ENCODE measurements at regions of chr3 and their contacts with region 1.

Region 1: GRCh38 chr3:198080521-198081280 is 120.7 kb downstream of the LMLN start:
- DNase-seq: peak; percentile 85
- H3K4me3 ChIP-seq: peak overlapping the region; percentile 17 to 59; a peak in 3 of 4 replicates
- H3K27ac ChIP-seq: no peak overlapping the region
- H3K4me1 ChIP-seq: no peaks in the 10 kb centered on the region; a peak in 1 of 4 replicates
- H3K27me3 ChIP-seq: peaks cover 56% of the 10 kb centered on the region
- CTCF ChIP-seq: peak; percentile 59
- EP300 ChIP-seq: no peak
- RAD21 ChIP-seq: no peak

Region 2: DNA sequence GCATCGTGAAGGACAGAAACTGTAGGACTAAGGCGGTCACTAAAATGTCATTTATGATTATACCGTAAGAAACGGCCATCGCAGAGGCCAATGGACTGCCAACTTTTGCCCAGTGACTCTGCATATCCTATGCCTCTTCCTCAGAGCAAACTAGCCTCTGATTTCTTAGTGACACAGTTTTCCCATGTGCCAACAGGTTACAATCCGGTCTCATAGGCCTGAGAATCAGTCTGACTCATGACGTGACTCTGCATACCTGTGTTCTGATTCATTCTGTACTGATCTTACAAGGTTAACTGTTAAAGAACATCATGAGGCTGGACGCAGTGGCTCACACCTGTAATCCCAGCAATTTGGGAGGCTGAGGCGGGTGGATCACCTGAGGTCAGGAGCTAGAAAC is 361.8 kb before region 1 on chr3:
- CTCF ChIA-PET with region 1: no interaction called
- POLR2A ChIA-PET with region 1: no interaction called
- DNase-seq: no peak
- H3K4me3 ChIP-seq: no peak overlapping the region
- H3K27ac ChIP-seq: peak overlapping the region in 1 of 2 experiments; percentile 85; a peak in 2 of 4 replicates
- H3K4me1 ChIP-seq: peaks cover 0 to 7% of the 10 kb centered on the region in 2 experiments; a peak in 1 of 4 replicates
- H3K27me3 ChIP-seq: no peaks in the 10 kb centered on the region
- CTCF ChIP-seq: no peak
- EP300 ChIP-seq: no peak; a peak in 1 of 4 replicates
- RAD21 ChIP-seq: no peak

Region 3: DNA sequence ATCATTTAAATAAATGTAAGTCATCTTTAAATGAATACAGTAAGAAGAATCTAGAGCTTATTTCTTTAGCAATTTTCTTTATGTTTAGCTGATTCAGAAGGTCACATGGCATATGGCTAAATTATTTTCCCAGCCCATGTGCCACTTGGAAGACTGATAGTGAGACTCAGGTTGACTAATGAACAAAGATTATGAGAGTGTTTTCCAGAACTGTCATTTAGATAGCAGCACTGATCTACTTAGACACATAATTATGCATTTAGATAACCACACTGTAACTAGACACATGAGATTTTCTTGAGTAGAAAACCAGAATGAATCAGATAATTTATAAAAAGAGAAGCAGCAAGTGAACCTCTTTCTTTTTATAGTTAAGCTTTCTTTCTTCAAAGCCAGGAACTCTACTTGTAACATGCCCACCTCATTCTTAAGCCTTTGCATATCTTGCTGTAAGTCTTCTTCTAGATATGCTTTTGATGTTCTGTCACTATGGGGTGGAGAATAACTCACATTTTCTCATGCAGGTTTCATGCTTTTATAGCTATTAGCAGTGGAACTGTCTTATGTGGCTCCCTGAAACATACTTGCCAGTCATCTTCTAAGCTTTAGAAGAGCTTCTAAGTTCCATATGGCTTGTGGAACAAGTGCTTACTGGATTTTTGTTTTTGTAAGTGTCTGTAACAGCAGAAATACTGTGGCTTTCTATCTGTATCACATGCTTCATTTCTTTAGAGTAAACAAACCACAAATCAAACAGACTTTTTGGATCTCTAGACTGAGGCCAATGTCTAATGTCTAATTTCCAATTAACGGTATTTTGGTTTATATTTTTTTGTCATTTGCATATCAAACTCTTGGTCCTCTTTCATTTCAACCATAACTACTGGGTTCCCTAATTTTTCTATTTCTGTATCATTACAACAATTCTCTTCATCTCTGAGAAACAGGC is 19.3 kb before region 1 on chr3:
- CTCF ChIA-PET with region 1: interaction called, 12 read pairs
- POLR2A ChIA-PET with region 1: no interaction called
- DNase-seq: no peak
- H3K4me3 ChIP-seq: no peak overlapping the region
- H3K27ac ChIP-seq: no peak overlapping the region
- H3K4me1 ChIP-seq: no peaks in the 10 kb centered on the region
- H3K27me3 ChIP-seq: peaks cover 15% of the 10 kb centered on the region; the same call in 1 of the 2 replicates
- CTCF ChIP-seq: no peak
- EP300 ChIP-seq: no peak
- RAD21 ChIP-seq: no peak

Measured in SK-N-SH (cell line).